ENCODE measurements at regions of chr3 and their contacts with region 1.

Region 1: GRCh38 chr3:32296256-32297204 is 58.0 kb downstream of the CMTM8 start:
- DNase-seq: peak; percentile 67 to 86
- ATAC-seq: peak; percentile 91 to 97
- H3K4me3 ChIP-seq: no peak overlapping the region
- H3K27ac ChIP-seq: peak overlapping the region in 1 of 2 experiments; percentile 14; a peak in 3 of 6 replicates
- H3K4me1 ChIP-seq: peaks cover 10% of the 10 kb centered on the region; the same call in 1 of the 3 replicates
- CTCF ChIP-seq: peak; percentile 89
- EP300 ChIP-seq: no peak
- POLR2A ChIP-seq: no peak
- RAD21 ChIP-seq: peak; percentile 74 to 76

Region 2: DNA sequence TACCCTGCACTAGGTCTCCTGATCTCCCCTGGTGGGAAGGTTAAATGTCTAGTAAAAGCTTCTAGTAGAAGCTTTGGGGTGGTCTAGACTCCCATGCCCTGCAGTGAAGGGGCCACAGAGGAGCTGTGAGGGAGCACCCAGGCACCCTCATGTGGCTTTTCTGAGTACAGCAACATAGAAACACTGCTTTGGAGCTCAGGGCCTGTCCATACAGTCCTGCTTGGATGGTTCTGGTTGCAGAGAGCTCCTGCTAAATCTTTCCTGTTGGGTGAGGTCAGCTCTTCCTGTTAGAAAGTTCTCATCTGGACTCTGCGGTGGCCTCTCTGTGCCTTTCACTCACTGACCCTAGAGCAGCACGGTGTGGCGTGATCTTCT is 142.3 kb before region 1 on chr3:
- CTCF ChIA-PET with region 1: no interaction called
- POLR2A ChIA-PET with region 1: no interaction called
- DNase-seq: peak in 1 of 2 experiments; percentile 18
- ATAC-seq: peak; percentile 84 to 95; a peak in 5 of 6 replicates
- H3K4me3 ChIP-seq: no peak overlapping the region
- H3K27ac ChIP-seq: no peak overlapping the region
- H3K4me1 ChIP-seq: no peaks in the 10 kb centered on the region
- CTCF ChIP-seq: peak; percentile 32; the same call in 2 of the 3 replicates
- EP300 ChIP-seq: no peak
- POLR2A ChIP-seq: no peak
- RAD21 ChIP-seq: peak; percentile 39 to 44

Region 3: GRCh38 chr3:32285891-32286290 is 10.6 kb before region 1 on chr3:
- CTCF ChIA-PET with region 1: interaction called, 10 read pairs
- POLR2A ChIA-PET with region 1: no interaction called
- DNase-seq: no peak
- ATAC-seq: no peak
- H3K4me3 ChIP-seq: no peak overlapping the region
- H3K27ac ChIP-seq: no peak overlapping the region
- H3K4me1 ChIP-seq: no peaks in the 10 kb centered on the region
- CTCF ChIP-seq: no peak
- EP300 ChIP-seq: no peak
- POLR2A ChIP-seq: no peak
- RAD21 ChIP-seq: no peak